Activated CD4-positive, alpha-beta T cell treated with anti-CD3 and anti-CD28 coated beads, Interleukin-2, amount 10 ng/mL, durations not matched to agents 7 days and 5 days (primary cell): ENCODE measurements at regions of chr18 and their contacts with region 1.

Region 1: GRCh38 chr18:62739911-62740310 is 24.6 kb downstream of the PHLPP1 start:
- DNase-seq: no peak
- H3K4me3 Mint-ChIP-seq: no peak overlapping the region
- H3K27ac Mint-ChIP-seq: no peak overlapping the region
- H3K4me1 Mint-ChIP-seq: no peaks in the 10 kb centered on the region
- H3K27me3 Mint-ChIP-seq: no peaks in the 10 kb centered on the region

Region 2: DNA sequence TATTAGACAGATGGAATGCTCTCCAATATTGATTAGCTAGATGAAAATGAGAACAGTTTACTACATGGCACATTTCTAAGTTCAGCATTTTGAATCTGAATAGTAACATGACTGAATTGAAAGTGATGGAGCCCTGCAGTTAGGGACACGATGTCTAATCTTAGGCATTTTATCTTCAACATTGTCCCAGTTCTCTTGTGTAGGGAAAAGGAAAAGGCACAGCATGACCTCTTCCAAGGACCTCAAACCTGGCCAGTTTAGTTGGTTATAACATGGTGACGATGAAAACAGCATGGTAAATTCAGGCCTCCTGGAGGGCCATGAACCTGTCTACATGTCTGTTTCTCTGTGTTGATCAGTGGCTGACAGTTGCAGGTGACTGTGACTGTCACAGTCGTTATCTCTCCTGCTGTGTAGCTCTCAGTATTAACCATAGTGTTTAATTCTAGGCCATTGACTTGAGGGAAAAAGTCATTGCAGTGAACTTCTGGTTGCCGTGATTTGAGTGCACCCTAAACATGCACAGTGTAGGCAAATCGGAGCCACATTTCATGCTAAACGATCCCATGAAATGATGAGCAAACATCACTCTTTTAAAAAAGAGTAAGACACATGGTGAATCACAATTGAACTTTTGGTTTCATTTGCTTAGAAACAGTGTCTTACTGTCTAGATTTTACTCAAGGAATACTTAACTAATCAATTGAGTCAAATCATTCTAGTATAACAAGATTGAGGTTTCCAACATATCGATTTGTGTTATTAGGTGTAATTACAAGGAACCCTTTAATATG is 105.1 kb after region 1 on chr18:
- CTCF ChIA-PET with region 1: no interaction called
- POLR2A ChIA-PET with region 1: no interaction called
- DNase-seq: peak; percentile 9
- H3K4me3 Mint-ChIP-seq: peak overlapping the region; percentile 51
- H3K27ac Mint-ChIP-seq: peak overlapping the region; percentile 89
- H3K4me1 Mint-ChIP-seq: peaks cover 25% of the 10 kb centered on the region
- H3K27me3 Mint-ChIP-seq: no peaks in the 10 kb centered on the region

Region 3: GRCh38 chr18:62999392-62999791 is 259.5 kb after region 1 on chr18:
- CTCF ChIA-PET with region 1: no interaction called
- POLR2A ChIA-PET with region 1: interaction called, 11 read pairs
- DNase-seq: no peak
- H3K4me3 Mint-ChIP-seq: no peak overlapping the region
- H3K27ac Mint-ChIP-seq: no peak overlapping the region
- H3K4me1 Mint-ChIP-seq: no peaks in the 10 kb centered on the region
- H3K27me3 Mint-ChIP-seq: peaks cover 3% of the 10 kb centered on the region